ENCODE measurements at regions of chr22 and their contacts with region 1.

Region 1: DNA sequence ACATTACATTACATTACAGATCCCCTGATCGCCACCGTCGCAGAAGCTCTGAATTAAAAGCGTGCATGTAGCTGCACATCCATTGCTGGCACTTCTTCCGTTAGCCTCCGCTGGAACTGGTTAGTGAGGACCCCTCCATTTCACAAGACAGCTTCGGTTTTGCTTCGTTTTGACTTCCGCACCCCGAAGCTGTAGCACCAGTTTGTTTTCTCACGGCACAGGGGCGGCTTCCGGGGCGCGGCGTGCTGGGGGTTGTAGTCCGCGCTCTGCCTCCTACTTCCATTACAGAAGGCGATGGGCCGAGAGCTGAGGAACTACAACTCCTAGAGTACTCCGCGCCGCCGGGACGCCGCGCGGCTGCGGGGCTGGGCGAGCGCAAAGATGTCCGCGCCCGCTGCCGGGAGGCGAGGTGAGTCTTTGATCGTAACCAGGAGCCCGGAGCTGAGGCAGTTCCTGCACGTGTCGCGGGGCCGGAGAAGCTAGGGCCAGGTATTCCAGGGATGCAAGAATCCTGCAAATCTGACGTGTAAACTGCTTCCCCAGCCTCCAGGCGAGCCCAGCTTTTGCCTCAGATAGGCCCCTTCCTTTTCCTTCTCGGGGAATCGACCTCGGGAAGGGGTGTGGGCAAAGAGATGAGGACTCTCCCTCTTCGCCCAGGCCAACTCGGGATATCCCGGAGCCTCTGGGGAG is at the start of gene PEX26:
- DNase-seq: peak; percentile 97 to 99 (median 98)
- H3K4me3 ChIP-seq: peak within 1 kb of the TSS; percentile 74 to 100 (median 99)
- H3K27ac ChIP-seq: peak within 1 kb of the TSS; percentile 78 to 86
- H3K4me1 ChIP-seq: peaks cover 9 to 29% (median 23%) of the 10 kb centered on the region in 4 experiments
- H3K27me3 ChIP-seq: no peaks in the 10 kb centered on the region

Region 2: DNA sequence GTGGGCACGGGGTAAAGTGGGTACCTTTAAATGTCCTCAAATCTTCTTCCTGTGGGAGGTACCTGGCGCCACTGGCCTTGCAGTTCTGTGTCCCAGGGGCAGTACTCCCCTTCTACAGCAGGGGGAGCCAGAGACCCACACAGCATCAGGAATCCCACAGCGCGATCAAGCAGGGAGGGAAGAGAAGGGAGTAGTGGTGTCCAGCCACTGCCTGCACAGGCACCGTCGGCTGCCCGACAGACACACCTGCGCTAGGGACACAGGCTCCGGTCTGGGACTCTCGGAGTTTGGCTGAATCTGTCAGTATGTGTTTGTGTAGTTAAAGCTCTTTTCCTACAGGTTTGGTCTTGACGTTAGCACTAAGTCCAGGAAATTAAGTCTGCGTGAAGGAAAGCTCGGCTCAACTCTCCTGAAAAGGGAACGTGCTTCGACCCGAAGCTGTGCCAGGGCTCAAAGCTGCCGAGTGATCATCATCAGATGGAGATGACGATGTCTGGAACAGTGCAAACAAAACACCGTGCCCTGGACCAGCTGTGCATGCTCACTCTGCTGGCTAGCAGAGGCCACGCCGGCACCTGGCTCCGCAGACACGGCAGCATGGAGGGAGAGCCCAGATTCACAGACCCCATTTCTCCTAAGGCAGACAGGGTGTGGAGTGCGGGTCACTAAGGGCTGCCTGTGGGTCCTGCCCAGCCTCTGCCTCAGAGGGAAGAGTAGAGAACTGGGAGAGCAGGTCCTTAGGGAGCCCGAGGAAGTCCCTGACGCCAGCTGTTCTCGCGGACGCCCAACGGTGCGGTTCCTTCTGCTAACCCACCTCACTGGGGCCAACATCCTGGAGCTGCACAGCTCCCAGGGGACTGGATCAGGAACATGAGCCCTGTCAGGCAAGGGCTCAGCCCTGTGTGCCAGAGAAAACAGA is 247.5 kb before region 1 on chr22:
- CTCF ChIA-PET with region 1: interaction called, 150 read pairs
- POLR2A ChIA-PET with region 1: no interaction called
- DNase-seq: peak; percentile 74 to 83 (median 74)
- H3K4me3 ChIP-seq: no peak overlapping the region
- H3K27ac ChIP-seq: no peak overlapping the region
- H3K4me1 ChIP-seq: no peaks in the 10 kb centered on the region
- H3K27me3 ChIP-seq: no peaks in the 10 kb centered on the region

Region 3: GRCh38 chr22:17891481-17892167 is 186.2 kb before region 1 on chr22:
- CTCF ChIA-PET with region 1: interaction called, 11 read pairs
- POLR2A ChIA-PET with region 1: no interaction called
- DNase-seq: no peak
- H3K4me3 ChIP-seq: no peak overlapping the region
- H3K27ac ChIP-seq: no peak overlapping the region
- H3K4me1 ChIP-seq: no peaks in the 10 kb centered on the region
- H3K27me3 ChIP-seq: no peaks in the 10 kb centered on the region

Region 4: DNA sequence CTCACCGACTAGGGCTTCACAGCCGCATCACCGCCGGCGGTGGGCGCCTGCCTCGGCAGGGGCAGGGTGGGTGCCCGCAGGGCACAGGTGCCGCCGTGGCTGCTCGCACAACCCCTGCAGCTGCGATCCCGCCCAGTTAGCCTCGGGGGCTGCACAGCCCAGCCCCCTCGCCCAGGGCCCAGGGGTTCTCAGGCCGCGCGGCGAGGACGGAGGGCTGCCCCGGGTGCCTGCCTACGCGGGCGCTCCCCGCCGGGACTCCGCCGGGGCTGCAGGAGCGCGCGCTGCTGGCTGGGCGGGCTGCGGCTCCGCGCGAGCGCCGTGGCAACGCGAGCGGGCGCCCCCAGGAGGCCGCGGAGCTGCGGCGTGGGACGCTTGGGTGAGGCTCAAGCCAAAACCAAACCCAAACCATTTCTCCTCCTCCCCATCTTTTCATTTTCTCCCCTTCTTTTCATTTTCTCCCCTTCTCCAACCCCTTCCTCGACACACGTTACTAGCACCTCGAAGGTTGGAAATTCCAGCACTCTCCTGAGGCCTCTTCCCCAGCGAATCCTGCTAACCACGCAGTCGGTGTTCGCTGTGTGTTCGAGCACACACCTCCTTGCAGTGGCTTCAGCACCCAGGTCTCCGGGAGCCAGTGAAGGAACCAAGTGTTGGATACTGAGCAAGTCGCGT is 53.4 kb before region 1 on chr22 and contains the start of gene MICAL3:
- CTCF ChIA-PET with region 1: interaction called, 11 read pairs
- POLR2A ChIA-PET with region 1: no interaction called
- DNase-seq: peak; percentile 66 to 83 (median 79)
- H3K4me3 ChIP-seq: peak within 1 kb of the TSS; percentile 42 to 86 (median 64)
- H3K27ac ChIP-seq: no peak within 1 kb of the TSS
- H3K4me1 ChIP-seq: peaks cover 0 to 18% (median 14%) of the 10 kb centered on the region in 4 experiments
- H3K27me3 ChIP-seq: peaks cover 2 to 26% (median 14%) of the 10 kb centered on the region in 5 experiments

Measured in common myeloid progenitor, CD34-positive (primary cell).